ENCODE measurements at regions of chr2 and their contacts with region 1.

Region 1: GRCh38 chr2:113203901-113204519 is 30.2 kb downstream of the PSD4 start:
- DNase-seq: no peak
- H3K4me3 ChIP-seq: no peak overlapping the region
- CTCF ChIP-seq: peak; percentile 89

Region 2: DNA sequence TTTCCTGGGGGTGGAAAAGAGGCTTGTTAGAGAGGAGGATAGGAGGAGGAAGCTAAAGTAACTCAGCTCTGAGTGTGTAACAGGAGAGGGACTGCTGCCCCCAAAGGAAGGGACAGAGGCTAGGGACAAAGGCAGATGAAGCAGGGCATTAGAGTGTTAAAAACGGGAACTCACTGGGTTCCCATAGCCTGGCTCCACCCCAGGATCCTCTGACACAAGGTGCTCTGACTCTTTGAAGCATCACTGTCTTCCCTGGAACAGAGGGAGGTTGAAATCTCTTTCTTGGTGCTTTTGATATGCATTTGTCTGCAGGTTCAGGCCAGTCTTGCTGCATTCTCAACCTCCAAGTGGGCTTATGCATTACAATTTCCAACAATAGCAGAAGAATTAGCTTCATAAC is 175.9 kb before region 1 on chr2:
- CTCF ChIA-PET with region 1: no interaction called
- POLR2A ChIA-PET with region 1: no interaction called
- DNase-seq: no peak
- H3K4me3 ChIP-seq: no peak overlapping the region
- CTCF ChIP-seq: no peak

Region 3: GRCh38 chr2:113192438-113193100 is 11.4 kb before region 1 on chr2:
- CTCF ChIA-PET with region 1: interaction called, 180 read pairs
- POLR2A ChIA-PET with region 1: no interaction called
- DNase-seq: no peak
- H3K4me3 ChIP-seq: no peak overlapping the region
- CTCF ChIP-seq: no peak

Region 4: DNA sequence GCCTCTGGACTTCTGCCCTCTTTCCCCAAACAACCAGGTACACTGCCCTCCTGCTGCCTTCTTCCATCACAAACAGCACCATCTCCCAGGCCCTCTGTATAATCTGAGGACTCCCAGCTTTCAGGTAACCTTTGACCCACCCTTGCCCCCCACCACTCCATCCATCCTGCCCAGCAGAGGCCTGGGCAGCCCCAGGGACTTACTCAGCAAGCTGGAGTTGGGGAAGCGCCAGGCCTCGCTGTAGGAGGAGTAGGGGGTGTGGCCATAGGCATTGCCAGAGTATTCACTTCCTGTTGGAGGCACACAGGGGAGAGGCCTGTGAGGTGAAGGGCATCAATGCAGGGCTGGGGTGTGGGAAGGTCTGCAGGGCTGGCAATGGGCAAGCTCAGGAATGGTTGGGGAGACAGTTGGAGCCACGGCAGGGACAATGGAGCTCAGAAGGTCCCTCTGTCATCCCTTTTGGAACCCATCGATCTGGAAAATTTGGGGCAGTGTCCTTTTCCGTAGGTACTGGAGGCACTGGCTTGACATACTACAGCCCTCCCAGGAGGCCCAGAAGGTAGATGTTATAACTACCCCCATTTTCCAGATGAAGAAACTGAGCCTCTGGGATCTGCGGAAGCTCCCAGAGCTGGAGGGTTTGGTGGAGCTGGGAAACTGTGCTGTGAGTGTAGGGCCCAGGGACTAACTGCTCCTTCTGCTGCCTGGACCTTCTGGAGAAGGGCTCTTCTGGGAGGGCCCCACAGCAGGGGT is 16.1 kb after region 1 on chr2:
- CTCF ChIA-PET with region 1: interaction called, 180 read pairs
- POLR2A ChIA-PET with region 1: no interaction called
- DNase-seq: no peak
- H3K4me3 ChIP-seq: no peak overlapping the region
- CTCF ChIP-seq: no peak

Region 5: GRCh38 chr2:113225263-113226259 is 21.6 kb after region 1 on chr2:
- CTCF ChIA-PET with region 1: interaction called, 22 read pairs
- POLR2A ChIA-PET with region 1: no interaction called
- DNase-seq: no peak
- H3K4me3 ChIP-seq: no peak overlapping the region
- CTCF ChIP-seq: no peak

Region 6: GRCh38 chr2:113248997-113249770 is 45.2 kb after region 1 on chr2:
- CTCF ChIA-PET with region 1: interaction called, 240 read pairs
- POLR2A ChIA-PET with region 1: interaction called, 5 read pairs
- DNase-seq: no peak
- H3K4me3 ChIP-seq: no peak overlapping the region
- CTCF ChIP-seq: peak; percentile 91

Region 7: GRCh38 chr2:113257516-113258264 is 53.7 kb after region 1 on chr2:
- CTCF ChIA-PET with region 1: interaction called, 27 read pairs
- POLR2A ChIA-PET with region 1: no interaction called
- DNase-seq: no peak
- H3K4me3 ChIP-seq: no peak overlapping the region
- CTCF ChIP-seq: no peak

Region 8: GRCh38 chr2:113328043-113328442 is 124.0 kb after region 1 on chr2:
- CTCF ChIA-PET with region 1: no interaction called
- POLR2A ChIA-PET with region 1: no interaction called
- DNase-seq: no peak
- H3K4me3 ChIP-seq: no peak overlapping the region
- CTCF ChIP-seq: no peak

Region 9: DNA sequence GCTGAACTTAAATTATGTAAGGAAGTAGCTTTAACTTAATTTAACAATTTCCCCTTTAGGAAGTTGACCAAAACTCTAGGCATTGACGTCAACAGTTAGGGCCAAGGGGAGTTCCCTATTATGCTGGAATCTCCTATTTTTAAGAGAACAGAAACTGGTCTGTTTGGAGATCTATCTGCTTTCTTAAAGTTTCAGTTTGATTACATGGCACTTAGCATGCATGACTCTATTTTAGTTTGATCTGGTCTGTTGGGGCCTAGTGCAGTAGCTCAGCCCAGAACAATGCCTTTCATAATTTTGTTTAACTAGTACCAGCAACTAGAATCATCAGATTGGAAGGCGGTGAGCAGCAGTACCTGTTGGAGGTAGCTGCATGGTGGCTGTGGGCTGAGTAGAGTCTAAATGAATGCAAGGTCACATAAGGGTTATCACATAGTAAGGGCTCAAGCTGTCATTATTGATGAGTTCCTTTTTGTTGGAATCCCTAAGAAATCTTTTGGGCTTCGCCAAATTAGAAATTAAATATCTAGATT is 173.0 kb after region 1 on chr2:
- CTCF ChIA-PET with region 1: interaction called, 198 read pairs
- POLR2A ChIA-PET with region 1: no interaction called
- DNase-seq: no peak
- H3K4me3 ChIP-seq: no peak overlapping the region
- CTCF ChIP-seq: no peak